Adrenal gland (tissue), 19 donors: ENCODE measurements at regions of chr10 and their contacts with region 1.

Region 1: GRCh38 chr10:125343118-125343925 is 183.0 kb upstream of the CTBP2 start:
- DNase-seq: peak in 3 of 7 donors; percentile 25 to 62 (median 36)
- H3K4me3 ChIP-seq: no peak overlapping the region
- H3K27ac ChIP-seq: no peak overlapping the region
- H3K4me1 ChIP-seq: no peaks in the 10 kb centered on the region
- H3K27me3 ChIP-seq: no peaks in the 10 kb centered on the region
- CTCF ChIP-seq: peak; percentile 34 to 64 (median 56)
- POLR2A ChIP-seq: no peak

Region 2: DNA sequence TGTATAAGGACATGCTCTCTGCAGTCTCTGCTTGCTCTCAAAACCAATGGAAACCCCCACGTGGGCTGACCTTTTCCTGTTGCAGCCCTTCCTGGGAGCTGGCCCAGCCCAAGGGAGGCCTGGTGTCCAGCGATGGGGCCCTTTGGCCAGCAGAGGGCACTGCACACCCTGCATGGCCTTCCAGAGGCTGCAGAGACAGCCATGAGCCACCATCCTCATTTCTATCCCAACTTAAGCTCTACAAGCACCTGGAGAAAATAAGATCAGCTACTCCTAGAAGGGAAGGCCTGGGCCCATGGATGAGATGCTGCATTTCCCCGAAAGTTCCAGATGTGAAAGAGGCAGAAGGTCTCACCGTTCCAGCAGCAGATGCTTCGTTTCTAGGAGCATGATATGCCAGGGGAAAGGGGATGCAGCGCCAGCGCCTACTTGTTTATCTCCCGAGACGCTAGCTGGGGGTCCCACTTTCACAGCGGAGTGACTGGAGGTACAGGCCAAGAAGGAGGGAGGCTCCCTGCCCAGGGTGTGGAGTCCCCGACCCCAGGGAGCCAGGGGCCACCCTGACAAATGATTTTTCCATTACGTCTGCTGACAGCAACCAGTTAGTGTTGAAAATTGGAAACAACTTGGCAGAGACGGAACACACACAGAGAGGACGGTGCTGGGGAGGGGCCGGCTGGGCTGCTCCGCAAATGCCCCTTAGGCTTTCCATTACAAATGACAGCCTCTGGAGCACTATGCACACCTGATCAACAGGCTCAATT is 295.0 kb before region 1 on chr10:
- intact Hi-C with region 1: loop called in 1 of 2 experiments (anchors 5 kb)
- DNase-seq: peak; percentile 87 to 96 (median 91)
- H3K4me3 ChIP-seq: no peak overlapping the region
- H3K27ac ChIP-seq: peak overlapping the region in 3 of 5 donors; percentile 8 to 65 (median 51)
- H3K4me1 ChIP-seq: peaks cover 4 to 37% of the 10 kb centered on the region in 2 donors
- H3K27me3 ChIP-seq: no peaks in the 10 kb centered on the region
- CTCF ChIP-seq: peak; percentile 88 to 98 (median 96)
- POLR2A ChIP-seq: no peak